Tibial artery (tissue), 4 donors: ENCODE measurements at regions of chr12 and their contacts with region 1.

Region 1: DNA sequence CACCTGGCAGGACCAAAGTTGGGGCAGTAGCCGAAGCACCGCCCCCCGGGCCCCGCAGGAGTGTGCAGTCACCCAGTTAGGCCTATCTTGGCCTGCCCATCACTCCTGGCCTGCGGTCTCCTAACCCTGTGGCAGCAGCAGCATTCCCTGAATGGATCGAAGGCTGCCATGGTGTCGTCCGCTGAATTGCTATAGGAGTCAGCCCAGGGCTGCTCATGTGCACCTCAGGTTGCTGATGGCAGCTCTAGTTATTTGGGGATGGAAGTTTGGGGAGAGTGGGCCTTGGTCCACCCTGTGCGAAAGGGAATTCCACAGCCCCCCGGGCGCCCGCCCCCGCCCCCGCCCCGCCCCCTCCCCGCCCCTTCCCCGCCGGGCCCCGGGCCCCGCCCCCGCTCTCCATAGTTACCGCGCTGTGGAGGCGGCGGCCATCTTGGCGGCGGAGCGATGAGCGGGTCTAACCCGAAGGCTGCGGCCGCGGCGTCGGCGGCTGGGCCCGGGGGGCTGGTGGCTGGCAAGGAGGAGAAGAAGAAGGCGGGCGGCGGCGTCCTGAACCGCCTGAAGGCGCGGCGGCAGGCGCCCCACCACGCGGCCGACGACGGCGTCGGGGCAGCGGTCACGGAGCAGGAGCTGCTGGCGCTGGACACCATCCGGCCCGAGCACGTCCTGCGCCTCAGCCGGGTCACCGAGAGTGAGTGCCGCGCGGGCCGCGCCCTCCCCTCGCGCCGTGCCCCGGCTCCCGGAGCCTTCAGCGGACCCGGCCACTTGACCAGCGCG is at the start of gene UNC119B:
- DNase-seq: peak; percentile 59 to 83
- H3K4me3 ChIP-seq: peak within 1 kb of the TSS; percentile 65 to 91
- H3K27ac ChIP-seq: peak within 1 kb of the TSS; percentile 89 to 90
- H3K4me1 ChIP-seq: peaks cover 0 to 23% (median 16%) of the 10 kb centered on the region in 4 donors
- H3K27me3 ChIP-seq: no peaks in the 10 kb centered on the region
- CTCF ChIP-seq: peak in 1 of 2 experiments; percentile 10

Region 2: DNA sequence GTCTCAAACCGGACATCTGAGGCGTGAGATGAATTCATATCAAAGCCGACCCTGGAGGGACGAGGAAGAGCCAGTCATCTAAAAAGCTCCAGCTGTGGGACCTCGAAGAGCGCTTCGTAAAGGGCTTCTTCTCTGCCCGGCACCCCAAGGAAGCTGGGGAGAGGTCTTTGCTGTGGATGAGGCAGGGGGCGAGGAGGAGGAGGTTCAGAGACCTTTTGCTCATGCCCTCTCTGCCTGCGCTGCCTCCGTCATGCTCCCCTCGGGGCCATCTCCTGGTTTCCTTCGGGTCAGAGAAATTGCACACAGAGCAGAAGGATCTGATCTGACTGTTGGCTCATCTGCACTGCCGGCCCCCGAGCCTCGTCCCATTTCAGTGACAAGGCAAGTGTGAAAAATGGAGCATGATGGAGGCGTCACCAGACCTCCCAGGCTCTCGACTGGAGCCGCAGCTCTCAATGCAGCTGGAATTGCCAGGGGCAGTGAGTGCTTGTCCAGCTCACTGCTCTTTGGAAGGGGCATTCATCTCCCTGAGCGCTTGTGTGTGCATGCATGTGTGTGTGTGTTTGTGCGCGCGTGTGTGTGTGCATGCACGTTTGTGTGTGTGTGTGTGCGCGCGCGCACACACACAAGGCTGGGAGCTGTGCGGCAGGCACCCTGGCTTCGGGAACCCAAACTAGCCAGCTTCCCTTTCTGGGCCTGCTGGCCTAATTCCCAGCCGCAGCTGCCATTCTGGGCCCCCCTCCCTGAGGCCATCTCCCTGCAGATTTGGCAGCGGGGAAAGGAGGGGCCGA is 60.6 kb before region 1 on chr12:
- intact Hi-C with region 1: loop called (anchors 5 kb)
- DNase-seq: peak in 1 of 2 donors; percentile 78
- H3K4me3 ChIP-seq: peak overlapping the region; percentile 42 to 57
- H3K27ac ChIP-seq: peak overlapping the region; percentile 88 to 92
- H3K4me1 ChIP-seq: peaks cover 0 to 58% (median 42%) of the 10 kb centered on the region in 4 donors
- H3K27me3 ChIP-seq: peaks cover 0 to 17% of the 10 kb centered on the region in 2 donors
- CTCF ChIP-seq: no peak

Region 3: GRCh38 chr12:120686690-120687577 is 23.3 kb before region 1 on chr12 and contains the start of gene MLEC:
- intact Hi-C with region 1: loop called (anchors 2 kb)
- DNase-seq: peak; percentile 98 to 99
- H3K4me3 ChIP-seq: peak within 1 kb of the TSS; percentile 78 to 87
- H3K27ac ChIP-seq: peak within 1 kb of the TSS; percentile 91 to 92
- H3K4me1 ChIP-seq: peaks cover 0 to 38% (median 28%) of the 10 kb centered on the region in 4 donors
- H3K27me3 ChIP-seq: no peaks in the 10 kb centered on the region
- CTCF ChIP-seq: no peak

Region 4: DNA sequence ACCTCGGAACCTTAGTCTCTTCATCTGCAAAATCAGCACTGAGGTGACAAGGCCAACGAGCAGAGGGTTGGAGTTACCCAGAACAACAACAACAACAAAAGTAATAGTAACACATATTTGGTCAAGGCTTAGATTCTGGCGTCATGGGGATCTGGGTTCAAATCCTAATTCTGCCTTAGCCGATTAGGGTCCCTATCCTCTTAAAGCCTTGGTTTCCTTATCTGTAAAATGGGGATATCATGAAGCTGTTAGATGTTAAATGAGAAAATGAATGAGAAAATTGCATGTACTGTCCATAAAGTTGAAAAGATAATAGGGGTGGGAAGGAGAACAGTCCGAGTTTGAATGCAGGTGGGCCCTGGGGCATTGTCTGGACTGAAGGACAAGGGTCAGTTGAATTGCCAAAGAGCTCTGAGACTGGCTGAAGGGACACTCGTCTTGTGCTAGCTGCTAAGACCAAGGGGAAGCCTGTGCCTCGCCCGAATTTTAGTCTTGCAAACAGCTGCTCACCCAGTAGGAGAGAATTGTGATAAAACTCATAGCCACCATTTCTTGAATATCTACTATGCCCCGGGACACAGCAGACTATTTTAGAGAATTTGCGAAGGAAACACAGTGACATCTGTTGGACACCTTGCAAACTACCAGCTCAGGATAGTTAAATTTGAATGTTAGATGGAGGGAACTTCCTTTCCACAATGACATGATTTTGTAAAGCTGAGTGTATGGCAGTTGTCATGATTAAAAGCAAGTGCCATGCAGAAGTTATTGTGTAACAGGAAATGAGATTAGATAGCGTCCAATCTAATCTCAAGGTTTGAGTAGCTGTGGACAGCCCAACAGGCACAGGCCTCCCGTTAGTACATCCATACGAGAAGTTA is 261.3 kb after region 1 on chr12:
- intact Hi-C with region 1: loop called (anchors 10 kb)
- DNase-seq: no peak
- H3K4me3 ChIP-seq: no peak overlapping the region
- H3K27ac ChIP-seq: no peak overlapping the region
- H3K4me1 ChIP-seq: no peaks in the 10 kb centered on the region
- H3K27me3 ChIP-seq: peaks cover 0 to 3% of the 10 kb centered on the region in 2 donors
- CTCF ChIP-seq: peak; percentile 70 to 78